Activated naive CD4-positive, alpha-beta T cell treated with anti-CD3 and anti-CD28 coated beads for 36 hours (primary cell): ENCODE measurements at regions of chr7 and their contacts with region 1.

Region 1: GRCh38 chr7:80428161-80429054 is 83.5 kb downstream of the GNAT3 start:
- DNase-seq: peak; percentile 16
- H3K4me3 Mint-ChIP-seq: no peak overlapping the region
- H3K27ac Mint-ChIP-seq: no peak overlapping the region
- H3K4me1 Mint-ChIP-seq: no peaks in the 10 kb centered on the region
- H3K27me3 Mint-ChIP-seq: peaks cover 4% of the 10 kb centered on the region

Region 2: GRCh38 chr7:80659120-80660055 is 231.0 kb after region 1 on chr7:
- CTCF ChIA-PET with region 1: no interaction called
- intact Hi-C with region 1: loop called (anchors 1 kb)
- DNase-seq: no peak
- H3K4me3 Mint-ChIP-seq: no peak overlapping the region
- H3K27ac Mint-ChIP-seq: no peak overlapping the region
- H3K4me1 Mint-ChIP-seq: no peaks in the 10 kb centered on the region
- H3K27me3 Mint-ChIP-seq: no peaks in the 10 kb centered on the region

Region 3: DNA sequence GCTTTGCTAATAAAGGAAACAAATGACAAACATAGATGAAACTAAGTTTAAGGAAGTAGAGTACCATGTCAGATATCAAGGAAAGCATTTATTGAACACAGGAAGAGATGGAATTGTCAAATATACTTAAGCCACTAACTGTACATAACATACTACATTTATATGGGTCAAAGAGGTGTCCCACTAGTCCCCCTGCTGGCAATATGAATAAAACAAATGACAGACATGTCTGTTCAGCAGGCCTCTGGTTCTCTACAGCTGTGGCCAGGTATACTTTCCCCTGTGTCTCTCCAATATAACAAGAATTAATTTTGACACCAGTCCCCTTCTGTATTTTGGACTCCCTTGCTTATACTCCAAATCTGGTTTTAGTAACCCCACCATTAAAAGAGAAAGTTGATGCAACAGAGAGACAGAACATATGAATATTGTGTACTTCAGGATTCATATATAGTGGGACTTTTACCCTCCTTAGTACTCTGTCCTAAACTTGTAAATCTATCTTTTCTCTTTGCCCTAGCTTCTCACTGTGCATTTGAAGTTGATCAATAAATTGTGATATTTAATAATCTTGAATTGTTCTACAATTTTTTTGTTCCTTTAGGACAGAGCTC is 253.0 kb after region 1 on chr7:
- CTCF ChIA-PET with region 1: no interaction called
- intact Hi-C with region 1: no loop called
- DNase-seq: no peak
- H3K4me3 Mint-ChIP-seq: no peak overlapping the region
- H3K27ac Mint-ChIP-seq: no peak overlapping the region
- H3K4me1 Mint-ChIP-seq: no peaks in the 10 kb centered on the region
- H3K27me3 Mint-ChIP-seq: peaks cover 1% of the 10 kb centered on the region

Region 4: GRCh38 chr7:80764132-80764531 is 335.7 kb after region 1 on chr7:
- CTCF ChIA-PET with region 1: no interaction called
- intact Hi-C with region 1: no loop called
- DNase-seq: no peak
- H3K4me3 Mint-ChIP-seq: no peak overlapping the region
- H3K27ac Mint-ChIP-seq: no peak overlapping the region
- H3K4me1 Mint-ChIP-seq: no peaks in the 10 kb centered on the region
- H3K27me3 Mint-ChIP-seq: no peaks in the 10 kb centered on the region